Left lung (tissue), 14 donors: ENCODE measurements at regions of chr4 and their contacts with region 1.

Region 1: GRCh38 chr4:152500800-152501434 is 35.0 kb downstream of the FBXW7 start:
- DNase-seq: peak in 2 of 4 donors; percentile 78 to 88
- ATAC-seq: peak; percentile 96
- H3K4me3 ChIP-seq: no peak overlapping the region
- H3K27ac ChIP-seq: no peak overlapping the region
- H3K4me1 ChIP-seq: peaks cover 0 to 7% of the 10 kb centered on the region in 2 donors
- H3K27me3 ChIP-seq: no peaks in the 10 kb centered on the region
- CTCF ChIP-seq: peak; percentile 66 to 72

Region 2: GRCh38 chr4:152189451-152190179 is 311.3 kb before region 1 on chr4:
- intact Hi-C with region 1: no loop called
- DNase-seq: no peak
- ATAC-seq: no peak
- H3K4me3 ChIP-seq: no peak overlapping the region
- H3K27ac ChIP-seq: no peak overlapping the region
- H3K4me1 ChIP-seq: no peaks in the 10 kb centered on the region
- H3K27me3 ChIP-seq: no peaks in the 10 kb centered on the region
- CTCF ChIP-seq: no peak

Region 3: DNA sequence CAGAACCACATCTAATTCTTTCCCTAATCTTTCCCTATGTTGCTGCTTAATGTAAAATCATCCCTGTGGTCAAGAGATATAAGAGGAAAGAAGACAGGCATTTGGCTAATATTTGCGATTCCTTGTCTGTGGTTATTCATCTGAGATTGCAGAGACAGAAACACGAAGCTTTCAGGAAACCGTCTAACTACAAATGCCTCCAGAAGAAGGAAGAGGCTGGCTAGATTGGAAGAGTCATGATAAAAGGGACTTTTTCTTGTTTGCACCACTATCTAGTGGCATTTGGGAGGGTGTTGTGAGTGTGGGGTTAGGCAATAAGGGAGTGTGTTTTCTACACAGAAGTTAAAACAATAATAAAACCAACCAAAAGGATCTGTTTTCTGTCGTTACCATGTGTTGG is 134.9 kb after region 1 on chr4:
- intact Hi-C with region 1: loop called in 1 of 2 experiments (anchors 5 kb)
- DNase-seq: no peak
- ATAC-seq: peak; percentile 46
- H3K4me3 ChIP-seq: no peak overlapping the region
- H3K27ac ChIP-seq: peak overlapping the region in 1 of 2 donors; percentile 89
- H3K4me1 ChIP-seq: peaks cover 0 to 30% of the 10 kb centered on the region in 2 donors
- H3K27me3 ChIP-seq: no peaks in the 10 kb centered on the region
- CTCF ChIP-seq: no peak